ENCODE measurements at regions of chr12 and their contacts with region 1.

Region 1: GRCh38 chr12:58540480-58541299 is 379.6 kb downstream of the LRIG3 start:
- DNase-seq: peak; percentile 60
- H3K4me3 ChIP-seq: no peak overlapping the region
- H3K27ac ChIP-seq: no peak overlapping the region
- H3K4me1 ChIP-seq: no peaks in the 10 kb centered on the region
- H3K27me3 ChIP-seq: no peaks in the 10 kb centered on the region
- CTCF ChIP-seq: peak; percentile 81

Region 2: GRCh38 chr12:59087077-59087673 is 546.5 kb after region 1 on chr12:
- intact Hi-C with region 1: loop called (anchors 10 kb)
- DNase-seq: no peak
- H3K4me3 ChIP-seq: no peak overlapping the region
- H3K27ac ChIP-seq: no peak overlapping the region
- H3K4me1 ChIP-seq: no peaks in the 10 kb centered on the region
- H3K27me3 ChIP-seq: peaks cover 4% of the 10 kb centered on the region
- CTCF ChIP-seq: peak; percentile 54

Measured in left ventricle myocardium inferior (tissue), 1 donor.